ENCODE measurements at regions of chr1 and their contacts with region 1.

Region 1: GRCh38 chr1:145891587-145892485 is 6.2 kb upstream of the ANKRD35 start:
- DNase-seq: peak; percentile 11 to 61 (median 33)
- ATAC-seq: peak; percentile 76
- H3K4me3 ChIP-seq: no peak overlapping the region
- H3K4me3 Mint-ChIP-seq: no peak overlapping the region
- H3K27ac ChIP-seq: no peak overlapping the region
- H3K27ac Mint-ChIP-seq: peak overlapping the region in 1 of 9 donors; percentile 36
- H3K4me1 ChIP-seq: no peaks in the 10 kb centered on the region
- H3K4me1 Mint-ChIP-seq: peaks cover 0 to 5% (median under 1%) of the 10 kb centered on the region in 7 donors
- H3K27me3 ChIP-seq: no peaks in the 10 kb centered on the region
- H3K27me3 Mint-ChIP-seq: peaks cover 0 to 5% (median 0%) of the 10 kb centered on the region in 5 donors

Region 2: GRCh38 chr1:145906954-145907753 is 15.3 kb after region 1 on chr1:
- CTCF ChIA-PET with region 1: interaction called, 5 read pairs
- POLR2A ChIA-PET with region 1: no interaction called
- intact Hi-C with region 1: loop called (anchors 1 kb)
- DNase-seq: no peak
- ATAC-seq: no peak
- H3K4me3 ChIP-seq: no peak overlapping the region
- H3K4me3 Mint-ChIP-seq: no peak overlapping the region
- H3K27ac ChIP-seq: no peak overlapping the region
- H3K27ac Mint-ChIP-seq: peak overlapping the region in 1 of 9 donors; percentile 49
- H3K4me1 ChIP-seq: no peaks in the 10 kb centered on the region
- H3K4me1 Mint-ChIP-seq: peaks cover 0 to 16% (median 5%) of the 10 kb centered on the region in 7 donors
- H3K27me3 ChIP-seq: no peaks in the 10 kb centered on the region
- H3K27me3 Mint-ChIP-seq: no peaks in the 10 kb centered on the region

Region 3: GRCh38 chr1:146012737-146013403 is 121.0 kb after region 1 on chr1:
- CTCF ChIA-PET with region 1: interaction called, 11 read pairs
- POLR2A ChIA-PET with region 1: interaction called, 3 read pairs
- intact Hi-C with region 1: loop called (anchors 1 kb)
- DNase-seq: peak in 7 of 9 donors; percentile 60 to 77 (median 65)
- ATAC-seq: peak; percentile 73
- H3K4me3 ChIP-seq: no peak overlapping the region
- H3K4me3 Mint-ChIP-seq: peak overlapping the region in 1 of 10 donors; percentile 53
- H3K27ac ChIP-seq: no peak overlapping the region
- H3K27ac Mint-ChIP-seq: no peak overlapping the region
- H3K4me1 ChIP-seq: peaks cover 0 to 1% of the 10 kb centered on the region in 2 donors
- H3K4me1 Mint-ChIP-seq: peaks cover 4 to 12% (median 10%) of the 10 kb centered on the region in 7 donors
- H3K27me3 ChIP-seq: no peaks in the 10 kb centered on the region
- H3K27me3 Mint-ChIP-seq: peaks cover 3 to 32% (median 4%) of the 10 kb centered on the region in 5 donors